Mammary epithelial cell (primary cell): ENCODE measurements at regions of chr5 and their contacts with region 1.

Region 1: GRCh38 chr5:37837414-37838032 is 2.3 kb downstream of the GDNF start:
- DNase-seq: peak; percentile 79
- H3K4me3 ChIP-seq: peak overlapping the region; percentile 37 to 59 (median 57)
- H3K27ac ChIP-seq: no peak overlapping the region
- H3K4me1 ChIP-seq: peaks cover 41% of the 10 kb centered on the region
- H3K27me3 ChIP-seq: no peaks in the 10 kb centered on the region
- CTCF ChIP-seq: peak; percentile 69 to 93

Region 2: GRCh38 chr5:37722236-37723146 is 115.0 kb before region 1 on chr5:
- CTCF ChIA-PET with region 1: no interaction called
- dilution Hi-C with region 1: no loop called
- in situ Hi-C with region 1: no loop called
- intact Hi-C with region 1: loop called (anchors 2 kb)
- DNase-seq: peak; percentile 96
- H3K4me3 ChIP-seq: no peak overlapping the region
- H3K27ac ChIP-seq: peak overlapping the region; percentile 53
- H3K4me1 ChIP-seq: peaks cover 21% of the 10 kb centered on the region
- H3K27me3 ChIP-seq: no peaks in the 10 kb centered on the region
- CTCF ChIP-seq: no peak

Region 3: GRCh38 chr5:37786862-37787519 is 50.5 kb before region 1 on chr5:
- CTCF ChIA-PET with region 1: no interaction called
- dilution Hi-C with region 1: no loop called
- in situ Hi-C with region 1: no loop called
- intact Hi-C with region 1: no loop called
- DNase-seq: peak; percentile 75
- H3K4me3 ChIP-seq: no peak overlapping the region
- H3K27ac ChIP-seq: no peak overlapping the region
- H3K4me1 ChIP-seq: peaks cover 12% of the 10 kb centered on the region
- H3K27me3 ChIP-seq: no peaks in the 10 kb centered on the region
- CTCF ChIP-seq: no peak

Region 4: GRCh38 chr5:37900692-37901091 is 63.2 kb after region 1 on chr5:
- CTCF ChIA-PET with region 1: no interaction called
- dilution Hi-C with region 1: no loop called
- in situ Hi-C with region 1: no loop called
- intact Hi-C with region 1: loop called (anchors 1 kb)
- DNase-seq: peak; percentile 24
- H3K4me3 ChIP-seq: no peak overlapping the region
- H3K27ac ChIP-seq: no peak overlapping the region
- H3K4me1 ChIP-seq: no peaks in the 10 kb centered on the region
- H3K27me3 ChIP-seq: no peaks in the 10 kb centered on the region
- CTCF ChIP-seq: peak in 1 of 2 donors; percentile 46

Region 5: DNA sequence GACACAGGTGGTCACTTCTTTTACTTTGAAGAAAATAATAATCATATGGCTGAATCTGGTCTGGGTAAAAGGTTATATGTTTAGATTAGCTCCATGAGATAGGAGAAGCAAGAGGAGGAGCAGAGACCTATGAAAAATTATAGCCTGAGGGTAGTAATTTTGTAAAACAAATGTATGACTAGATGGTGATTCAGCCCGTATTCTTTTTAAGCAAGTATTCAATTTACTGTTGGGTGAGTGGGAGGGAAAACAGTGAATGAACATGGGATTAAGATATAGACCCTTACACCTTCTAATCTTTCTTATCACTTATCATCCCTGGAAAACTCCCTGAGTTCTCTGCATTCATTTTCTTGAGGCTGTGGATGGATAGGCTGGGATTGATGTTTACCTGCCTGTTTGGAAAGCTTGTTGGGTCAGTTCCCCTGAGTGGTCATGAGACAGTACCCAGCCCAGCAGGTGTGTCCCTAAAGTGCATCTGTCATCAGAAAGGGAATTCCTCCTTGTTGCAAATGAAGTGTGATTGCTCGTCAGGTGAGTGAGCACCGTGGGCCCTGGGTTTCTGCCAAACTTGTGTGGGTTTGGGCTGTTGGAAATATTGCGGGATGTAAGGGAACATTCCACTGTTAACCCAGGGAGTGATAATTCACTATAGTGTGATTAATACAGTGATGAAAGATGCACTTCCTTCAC is 103.6 kb after region 1 on chr5:
- CTCF ChIA-PET with region 1: interaction called, 3 read pairs
- dilution Hi-C with region 1: no loop called
- in situ Hi-C with region 1: no loop called
- intact Hi-C with region 1: loop called (anchors 5 kb)
- DNase-seq: peak; percentile 93
- H3K4me3 ChIP-seq: no peak overlapping the region
- H3K27ac ChIP-seq: peak overlapping the region; percentile 60
- H3K4me1 ChIP-seq: peaks cover 23% of the 10 kb centered on the region
- H3K27me3 ChIP-seq: no peaks in the 10 kb centered on the region
- CTCF ChIP-seq: no peak

Region 6: DNA sequence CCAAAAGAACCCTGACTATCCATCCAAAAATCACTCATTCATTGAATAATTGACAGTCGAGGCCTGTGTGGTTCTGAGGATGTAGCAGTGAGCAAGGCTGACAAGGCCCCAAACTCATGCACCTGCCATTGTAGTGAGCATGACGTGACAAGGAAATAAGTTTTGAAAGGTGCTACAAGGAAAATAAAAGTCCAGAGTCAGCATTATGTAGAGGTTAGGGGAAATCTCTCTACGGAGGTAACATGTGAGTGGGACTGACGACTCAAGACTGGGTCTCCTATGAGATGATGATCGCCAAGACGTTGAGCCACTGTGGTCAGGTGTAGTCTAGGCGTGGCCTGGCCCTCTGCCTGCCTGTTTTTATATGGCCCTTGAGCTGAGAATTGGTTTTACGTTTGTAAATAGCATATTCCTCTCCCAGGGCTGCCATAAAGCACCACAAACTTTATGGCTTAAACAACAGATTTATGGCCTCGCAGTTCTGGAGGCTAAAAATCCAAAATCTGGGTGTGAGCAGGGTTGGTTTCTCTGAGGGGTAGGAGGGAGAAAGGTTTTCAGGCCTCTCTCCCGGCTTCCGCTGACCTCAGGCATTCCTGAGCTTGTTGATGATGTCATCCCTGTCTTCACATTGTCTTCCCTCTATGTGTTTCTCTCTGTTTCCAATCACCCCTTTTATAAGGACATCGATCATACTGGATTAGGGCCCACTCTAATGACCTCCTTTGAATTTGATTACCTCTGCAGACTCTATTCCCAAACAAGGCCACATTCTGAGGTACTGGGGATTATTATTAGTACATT is 214.4 kb after region 1 on chr5:
- CTCF ChIA-PET with region 1: no interaction called
- dilution Hi-C with region 1: no loop called
- in situ Hi-C with region 1: no loop called
- intact Hi-C with region 1: no loop called
- DNase-seq: no peak
- H3K4me3 ChIP-seq: no peak overlapping the region
- H3K27ac ChIP-seq: no peak overlapping the region
- H3K4me1 ChIP-seq: no peaks in the 10 kb centered on the region
- H3K27me3 ChIP-seq: no peaks in the 10 kb centered on the region
- CTCF ChIP-seq: no peak

Region 7: DNA sequence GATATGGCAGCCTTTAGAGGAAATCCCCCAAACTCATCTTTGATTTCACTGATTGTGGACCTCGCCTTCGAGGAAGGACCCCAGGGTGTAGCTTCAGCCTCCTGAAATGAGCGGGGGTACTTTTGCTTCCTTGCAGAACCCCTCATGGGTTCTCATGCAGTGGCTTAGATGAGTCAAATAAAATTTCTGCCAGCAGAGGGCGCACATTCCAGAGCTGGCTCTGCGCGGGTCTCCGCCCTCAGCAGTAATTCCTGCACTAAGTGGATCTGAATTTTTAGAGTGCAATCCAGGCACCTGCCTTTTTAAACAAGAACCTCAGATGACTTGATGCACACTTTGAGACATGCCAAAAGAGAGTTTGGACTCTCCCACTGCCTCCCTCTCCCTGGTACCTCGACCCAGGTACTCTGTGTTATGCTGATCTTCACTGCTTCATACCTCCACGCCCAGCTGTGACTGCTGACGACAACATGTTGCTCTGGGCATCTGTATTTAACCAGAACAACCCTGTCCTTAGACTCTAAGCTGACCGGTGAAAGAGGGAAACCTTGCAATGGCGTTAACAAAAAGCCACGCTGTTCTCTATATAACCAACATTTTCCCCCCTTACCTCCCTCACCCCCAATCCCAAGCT is 428.1 kb after region 1 on chr5:
- CTCF ChIA-PET with region 1: no interaction called
- dilution Hi-C with region 1: no loop called
- in situ Hi-C with region 1: no loop called
- intact Hi-C with region 1: loop called (anchors 1 kb)
- DNase-seq: peak; percentile 29
- H3K4me3 ChIP-seq: no peak overlapping the region
- H3K27ac ChIP-seq: no peak overlapping the region
- H3K4me1 ChIP-seq: no peaks in the 10 kb centered on the region
- H3K27me3 ChIP-seq: peaks cover 7% of the 10 kb centered on the region
- CTCF ChIP-seq: peak; percentile 73 to 81

Region 8: DNA sequence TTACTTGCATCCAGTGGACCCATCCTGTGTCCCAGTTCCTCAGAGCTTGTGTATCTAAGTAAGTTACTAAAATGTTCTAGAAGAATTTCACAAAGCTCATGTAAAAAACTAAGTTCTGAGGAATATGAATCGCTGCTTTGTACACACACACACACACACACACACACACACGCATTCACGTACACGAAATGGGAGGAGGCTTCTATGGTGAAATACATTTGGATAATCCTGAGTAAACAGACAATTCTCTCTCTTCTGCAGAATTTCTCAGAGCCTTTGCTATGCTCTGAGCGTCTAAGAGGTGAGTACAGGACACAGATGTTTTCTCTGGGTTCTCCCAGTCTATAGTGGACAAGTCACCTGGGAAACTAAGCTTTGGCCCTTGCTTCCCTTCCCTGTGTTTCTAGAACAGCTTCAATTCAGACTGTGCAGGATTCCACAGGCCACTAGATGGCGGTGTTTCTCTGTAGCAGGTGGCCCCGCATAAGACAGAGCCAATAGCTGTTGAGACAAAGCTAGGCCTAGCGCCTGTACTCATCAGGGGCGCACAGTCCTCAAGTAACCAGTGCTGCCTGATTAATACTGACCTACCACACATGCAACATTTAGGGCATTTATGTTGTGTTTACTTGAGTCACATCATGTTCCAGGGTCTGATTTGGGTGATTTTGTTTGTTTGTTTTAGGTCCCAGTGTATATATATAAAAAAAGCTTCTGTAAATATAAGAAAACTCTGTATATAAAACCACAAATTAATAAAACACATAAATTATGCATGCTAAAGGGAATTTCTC is 604.1 kb after region 1 on chr5:
- CTCF ChIA-PET with region 1: no interaction called
- dilution Hi-C with region 1: no loop called
- in situ Hi-C with region 1: no loop called
- intact Hi-C with region 1: no loop called
- DNase-seq: peak; percentile 73
- H3K4me3 ChIP-seq: no peak overlapping the region
- H3K27ac ChIP-seq: no peak overlapping the region
- H3K4me1 ChIP-seq: no peaks in the 10 kb centered on the region
- H3K27me3 ChIP-seq: no peaks in the 10 kb centered on the region
- CTCF ChIP-seq: peak; percentile 98

Region 9: GRCh38 chr5:38509185-38509584 is 671.7 kb after region 1 on chr5:
- CTCF ChIA-PET with region 1: no interaction called
- dilution Hi-C with region 1: no loop called
- in situ Hi-C with region 1: no loop called
- intact Hi-C with region 1: no loop called
- DNase-seq: peak; percentile 17
- H3K4me3 ChIP-seq: no peak overlapping the region
- H3K27ac ChIP-seq: no peak overlapping the region
- H3K4me1 ChIP-seq: no peaks in the 10 kb centered on the region
- H3K27me3 ChIP-seq: no peaks in the 10 kb centered on the region
- CTCF ChIP-seq: no peak